GM12878 (cell line): ENCODE measurements at regions of chr12 and their contacts with region 1.

Region 1: GRCh38 chr12:12736759-12737676 is 19.9 kb downstream of the CDKN1B start:
- DNase-seq: peak; percentile 45
- ATAC-seq: peak; percentile 95
- H3K4me3 ChIP-seq: peak overlapping the region; percentile 48; the same call in 1 of the 2 replicates
- H3K27ac ChIP-seq: peak overlapping the region; percentile 71
- H3K4me1 ChIP-seq: peaks cover 5% of the 10 kb centered on the region
- H3K27me3 ChIP-seq: no peaks in the 10 kb centered on the region
- CTCF ChIP-seq: peak; percentile 53 to 63 (median 58); a peak in 5 of 6 replicates
- EP300 ChIP-seq: 0 out of 4 replicates have a peak, but pooled peaks of 1 of the 2 experiments have one; percentile 8
- POLR2A ChIP-seq: peak; percentile 44; the same call in 1 of the 2 replicates
- RAD21 ChIP-seq: peak; percentile 62

Region 2: GRCh38 chr12:12081836-12082497 is 655.1 kb before region 1 on chr12:
- CTCF ChIA-PET with region 1: interaction called, 3 read pairs
- POLR2A ChIA-PET with region 1: no interaction called
- RAD21 ChIA-PET with region 1: interaction called, 13 read pairs
- SMC1A ChIA-PET with region 1: no interaction called
- in situ Hi-C with region 1: no loop called
- intact Hi-C with region 1: no loop called
- DNase-seq: peak; percentile 39
- ATAC-seq: peak; percentile 96
- H3K4me3 ChIP-seq: no peak overlapping the region
- H3K27ac ChIP-seq: no peak overlapping the region
- H3K4me1 ChIP-seq: no peaks in the 10 kb centered on the region
- H3K27me3 ChIP-seq: no peaks in the 10 kb centered on the region
- CTCF ChIP-seq: peak; percentile 33 to 54 (median 34); a peak in 4 of 6 replicates
- EP300 ChIP-seq: no peak
- POLR2A ChIP-seq: no peak
- RAD21 ChIP-seq: peak; percentile 80

Region 3: GRCh38 chr12:12384571-12385340 is 352.3 kb before region 1 on chr12:
- CTCF ChIA-PET with region 1: interaction called, 86 read pairs
- POLR2A ChIA-PET with region 1: interaction called, 7 read pairs
- RAD21 ChIA-PET with region 1: interaction called, 88 read pairs
- SMC1A ChIA-PET with region 1: interaction called, 83 read pairs
- in situ Hi-C with region 1: no loop called
- intact Hi-C with region 1: no loop called
- DNase-seq: no peak
- ATAC-seq: peak; percentile 88
- H3K4me3 ChIP-seq: no peak overlapping the region
- H3K27ac ChIP-seq: no peak overlapping the region
- H3K4me1 ChIP-seq: peaks cover 7% of the 10 kb centered on the region
- H3K27me3 ChIP-seq: no peaks in the 10 kb centered on the region
- CTCF ChIP-seq: no peak
- EP300 ChIP-seq: 0 out of 4 replicates have a peak, but pooled peaks of 1 of the 2 experiments have one; percentile 11
- POLR2A ChIP-seq: no peak
- RAD21 ChIP-seq: no peak

Region 4: GRCh38 chr12:12562585-12563261 is 174.3 kb before region 1 on chr12 and contains the start of gene DUSP16:
- CTCF ChIA-PET with region 1: interaction called, 17 read pairs
- POLR2A ChIA-PET with region 1: interaction called, 4 read pairs
- RAD21 ChIA-PET with region 1: interaction called, 20 read pairs
- SMC1A ChIA-PET with region 1: interaction called, 5 read pairs
- in situ Hi-C with region 1: no loop called
- intact Hi-C with region 1: loop called (anchors 5 kb)
- DNase-seq: peak; percentile 75
- ATAC-seq: peak; percentile 78
- H3K4me3 ChIP-seq: peak within 1 kb of the TSS; percentile 97
- H3K27ac ChIP-seq: peak within 1 kb of the TSS; percentile 100
- H3K4me1 ChIP-seq: peaks cover 13% of the 10 kb centered on the region
- H3K27me3 ChIP-seq: no peaks in the 10 kb centered on the region
- CTCF ChIP-seq: peak in 1 of 3 experiments; percentile 27; a peak in 1 of 6 replicates
- EP300 ChIP-seq: 0 out of 4 replicates have a peak, but pooled peaks of 1 of the 2 experiments have one; percentile 10
- POLR2A ChIP-seq: peak; percentile 80
- RAD21 ChIP-seq: 0 out of 2 replicates have a peak, but pooled peaks have one; percentile 18
- polyA plus RNA-seq, gene DUSP16: 3.9 to 5.0 TPM

Region 5: DNA sequence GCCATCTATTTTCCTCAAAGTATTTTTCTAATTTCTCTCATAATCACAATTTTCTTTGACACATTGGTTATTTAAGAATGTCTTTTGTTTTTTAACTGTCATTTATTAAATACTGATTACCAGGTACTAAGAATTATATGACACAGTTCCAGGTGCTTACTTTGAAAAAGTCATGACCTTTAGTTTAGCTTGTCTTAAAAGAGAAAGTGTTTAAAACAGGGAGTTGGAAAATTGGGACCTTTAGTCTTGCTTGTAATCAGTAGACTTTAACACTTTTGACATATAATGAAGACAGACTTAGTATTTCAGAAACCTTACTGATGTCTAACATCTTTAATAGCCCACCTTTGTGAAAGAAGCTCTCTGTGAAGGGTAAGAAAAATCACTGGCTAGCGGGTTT is 106.2 kb before region 1 on chr12:
- CTCF ChIA-PET with region 1: interaction called, 21 read pairs
- POLR2A ChIA-PET with region 1: interaction called, 3 read pairs
- RAD21 ChIA-PET with region 1: interaction called, 8 read pairs
- SMC1A ChIA-PET with region 1: interaction called, 6 read pairs
- in situ Hi-C with region 1: no loop called
- intact Hi-C with region 1: no loop called
- DNase-seq: no peak
- ATAC-seq: no peak
- H3K4me3 ChIP-seq: no peak overlapping the region
- H3K27ac ChIP-seq: no peak overlapping the region
- H3K4me1 ChIP-seq: no peaks in the 10 kb centered on the region
- H3K27me3 ChIP-seq: no peaks in the 10 kb centered on the region
- CTCF ChIP-seq: no peak
- EP300 ChIP-seq: no peak
- POLR2A ChIP-seq: no peak
- RAD21 ChIP-seq: no peak

Region 6: GRCh38 chr12:12686925-12687324 is 50.1 kb before region 1 on chr12:
- CTCF ChIA-PET with region 1: interaction called, 13 read pairs
- POLR2A ChIA-PET with region 1: no interaction called
- RAD21 ChIA-PET with region 1: interaction called, 11 read pairs
- SMC1A ChIA-PET with region 1: interaction called, 15 read pairs
- in situ Hi-C with region 1: no loop called
- intact Hi-C with region 1: no loop called
- DNase-seq: no peak
- ATAC-seq: no peak
- H3K4me3 ChIP-seq: no peak overlapping the region
- H3K27ac ChIP-seq: no peak overlapping the region
- H3K4me1 ChIP-seq: peaks cover 29% of the 10 kb centered on the region
- H3K27me3 ChIP-seq: no peaks in the 10 kb centered on the region
- CTCF ChIP-seq: no peak
- EP300 ChIP-seq: no peak
- POLR2A ChIP-seq: no peak
- RAD21 ChIP-seq: no peak

Region 7: GRCh38 chr12:12786716-12787601 is 49.9 kb after region 1 on chr12:
- CTCF ChIA-PET with region 1: interaction called, 31 read pairs
- POLR2A ChIA-PET with region 1: no interaction called
- RAD21 ChIA-PET with region 1: interaction called, 13 read pairs
- SMC1A ChIA-PET with region 1: interaction called, 8 read pairs
- in situ Hi-C with region 1: no loop called
- intact Hi-C with region 1: no loop called
- DNase-seq: no peak
- ATAC-seq: peak; percentile 96
- H3K4me3 ChIP-seq: peak overlapping the region; percentile 65
- H3K27ac ChIP-seq: peak overlapping the region; percentile 27; the same call in 1 of the 2 replicates
- H3K4me1 ChIP-seq: peaks cover 18% of the 10 kb centered on the region
- H3K27me3 ChIP-seq: no peaks in the 10 kb centered on the region
- CTCF ChIP-seq: no peak
- EP300 ChIP-seq: no peak
- POLR2A ChIP-seq: peak; percentile 96
- RAD21 ChIP-seq: no peak

Region 8: GRCh38 chr12:12823292-12823691 is 86.3 kb after region 1 on chr12:
- CTCF ChIA-PET with region 1: no interaction called
- POLR2A ChIA-PET with region 1: no interaction called
- RAD21 ChIA-PET with region 1: no interaction called
- SMC1A ChIA-PET with region 1: no interaction called
- in situ Hi-C with region 1: no loop called
- intact Hi-C with region 1: no loop called
- DNase-seq: no peak
- ATAC-seq: no peak
- H3K4me3 ChIP-seq: no peak overlapping the region
- H3K27ac ChIP-seq: no peak overlapping the region
- H3K4me1 ChIP-seq: peaks cover 12% of the 10 kb centered on the region
- H3K27me3 ChIP-seq: no peaks in the 10 kb centered on the region
- CTCF ChIP-seq: no peak
- EP300 ChIP-seq: no peak
- POLR2A ChIP-seq: no peak
- RAD21 ChIP-seq: no peak